ENCODE measurements at regions of chr13 and their contacts with region 1.

Region 1: DNA sequence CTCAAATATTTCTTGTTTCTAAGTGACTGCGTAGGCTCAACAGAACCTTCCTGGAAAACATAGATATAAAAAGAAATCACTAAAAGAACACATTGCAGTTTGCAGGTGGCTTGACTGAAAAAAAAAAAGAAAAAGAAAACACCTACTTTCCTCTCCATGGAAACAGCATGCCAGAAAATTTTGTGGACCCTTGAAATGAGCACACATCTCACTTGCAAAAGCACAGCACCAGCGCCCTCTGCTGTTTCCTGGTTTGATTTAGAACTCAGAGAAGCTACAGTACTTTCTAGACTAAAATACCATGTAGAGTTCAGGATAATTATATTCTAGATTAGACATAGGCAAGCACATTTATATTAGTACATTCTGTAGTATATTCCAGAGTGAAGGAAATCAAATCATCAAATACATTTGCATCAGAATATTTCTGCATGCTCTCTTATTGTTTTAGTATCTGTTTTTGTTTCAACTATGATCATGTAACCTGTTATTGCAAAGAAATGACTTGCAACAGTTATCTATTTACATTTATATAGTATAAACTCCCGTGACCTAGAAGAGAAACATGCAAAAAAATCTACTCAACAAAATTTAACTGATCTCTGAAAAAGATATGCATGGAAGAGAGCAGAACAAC is 22.3 kb upstream of the XPO4 start:
- DNase-seq: peak; percentile 81 to 93
- H3K4me3 ChIP-seq: no peak overlapping the region
- H3K27ac ChIP-seq: no peak overlapping the region
- H3K4me1 ChIP-seq: no peaks in the 10 kb centered on the region
- H3K27me3 ChIP-seq: no peaks in the 10 kb centered on the region
- CTCF ChIP-seq: peak in 5 of 7 experiments; percentile 53 to 65 (median 61)
- EP300 ChIP-seq: no peak
- POLR2A ChIP-seq: no peak

Region 2: GRCh38 chr13:20495082-20496023 is 429.5 kb before region 1 on chr13:
- intact Hi-C with region 1: loop called (anchors 10 kb)
- DNase-seq: peak; percentile 65 to 85
- H3K4me3 ChIP-seq: no peak overlapping the region
- H3K27ac ChIP-seq: no peak overlapping the region
- H3K4me1 ChIP-seq: peaks cover 0 to 12% (median 7%) of the 10 kb centered on the region in 4 donors
- H3K27me3 ChIP-seq: no peaks in the 10 kb centered on the region
- CTCF ChIP-seq: peak in 5 of 7 experiments; percentile 75 to 95 (median 94)
- EP300 ChIP-seq: no peak
- POLR2A ChIP-seq: no peak

Region 3: DNA sequence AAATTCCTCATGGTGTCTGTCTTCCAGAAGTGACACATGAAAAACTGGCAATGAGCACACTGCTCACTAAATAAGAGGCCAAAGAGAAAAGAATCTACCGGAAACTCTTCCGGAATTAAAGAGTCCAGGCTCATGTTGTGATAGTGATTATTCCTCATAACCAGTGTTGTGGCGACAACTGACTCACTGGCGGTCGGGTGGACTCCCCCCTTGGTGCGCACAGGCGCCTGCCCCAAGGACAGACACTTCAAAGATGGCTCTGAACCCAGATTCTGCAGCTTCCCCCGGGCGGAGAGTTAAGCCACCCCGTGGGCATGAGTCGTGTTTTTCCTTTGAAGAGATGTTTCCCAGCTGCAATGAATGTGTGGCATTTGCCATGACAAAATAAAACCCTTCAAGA is 211.1 kb before region 1 on chr13:
- intact Hi-C with region 1: loop called (anchors 5 kb)
- DNase-seq: peak in 1 of 2 donors; percentile 35
- H3K4me3 ChIP-seq: no peak overlapping the region
- H3K27ac ChIP-seq: peak overlapping the region in 2 of 5 donors; percentile 67 to 68
- H3K4me1 ChIP-seq: peaks cover 8 to 31% (median 20%) of the 10 kb centered on the region in 4 donors
- H3K27me3 ChIP-seq: peaks cover 0 to 12% (median 0%) of the 10 kb centered on the region in 3 donors
- CTCF ChIP-seq: no peak
- EP300 ChIP-seq: no peak
- POLR2A ChIP-seq: no peak

Measured in stomach (tissue), 19 donors.